GM10248 (cell line): ENCODE measurements at regions of chr3 and their contacts with region 1.

Region 1: GRCh38 chr3:113065233-113065835 is 74.5 kb downstream of the GTPBP8 start:
- DNase-seq: no peak
- CTCF ChIP-seq: no peak

Region 2: DNA sequence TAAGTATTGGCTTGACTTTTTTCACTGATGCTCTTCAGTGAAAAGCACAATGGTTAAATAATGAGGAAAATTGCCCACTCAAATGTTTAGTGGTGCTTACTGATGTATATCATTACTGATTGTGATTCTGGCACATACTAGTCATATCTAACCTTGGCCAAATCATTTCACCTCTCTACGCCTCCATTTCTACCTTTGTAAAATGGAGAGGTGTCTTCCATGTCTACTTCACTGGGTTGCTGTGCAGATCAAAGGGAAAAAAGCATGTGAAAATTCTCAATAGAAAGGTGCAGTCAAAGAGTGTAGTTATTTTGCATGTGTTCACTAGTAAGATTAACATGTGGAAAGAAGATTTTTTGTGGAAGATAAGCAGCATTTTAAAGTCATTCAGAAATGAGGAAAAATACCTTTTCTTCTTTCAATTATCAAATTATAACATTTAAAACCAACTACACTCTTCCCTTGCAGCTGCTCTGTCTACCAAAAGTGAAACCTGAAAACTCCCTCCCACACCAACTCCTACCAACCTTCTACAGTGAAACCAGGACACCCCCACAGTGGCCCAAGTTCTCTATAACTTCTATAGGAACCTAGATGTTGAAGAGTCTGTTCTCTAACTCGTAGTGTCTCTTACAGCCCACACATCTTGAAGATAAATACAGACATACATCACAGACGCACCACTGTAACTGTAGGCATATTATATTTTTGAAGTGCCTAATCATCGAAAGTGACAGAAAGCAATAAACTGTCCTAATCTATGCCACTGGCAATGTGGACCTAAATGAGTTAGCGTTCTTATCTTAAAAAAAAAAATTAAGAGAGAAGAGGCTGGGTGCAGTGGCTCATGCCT is 91.8 kb before region 1 on chr3:
- CTCF ChIA-PET with region 1: no interaction called
- POLR2A ChIA-PET with region 1: no interaction called
- DNase-seq: peak; percentile 42
- CTCF ChIP-seq: no peak

Region 3: GRCh38 chr3:113079218-113079961 is 14.1 kb after region 1 on chr3:
- CTCF ChIA-PET with region 1: interaction called, 13 read pairs
- POLR2A ChIA-PET with region 1: no interaction called
- DNase-seq: peak; percentile 42
- CTCF ChIP-seq: no peak